ENCODE measurements at regions of chr21 and their contacts with region 1.

Region 1: DNA sequence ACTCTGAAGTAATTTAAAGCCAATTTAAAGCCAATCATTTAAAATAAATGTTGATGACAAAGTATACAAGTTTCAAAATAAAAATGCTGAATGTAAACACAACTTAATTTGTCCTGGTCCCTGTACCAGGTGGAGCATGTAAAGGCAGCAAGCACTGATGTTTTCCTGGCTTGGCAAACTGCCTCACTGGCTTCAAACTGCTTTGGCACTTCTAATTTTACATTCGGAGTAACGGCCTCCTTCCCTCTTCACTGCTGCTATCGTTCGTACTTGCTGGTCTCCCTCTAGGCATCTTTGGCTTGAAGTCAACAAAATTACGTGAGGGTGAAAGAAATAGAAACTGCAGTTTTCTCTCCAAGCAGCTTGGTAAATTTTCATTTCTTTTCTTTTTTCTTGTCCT is 287.9 kb downstream of the LTN1 start:
- DNase-seq: peak; percentile 65
- H3K4me3 ChIP-seq: no peak overlapping the region
- H3K27ac ChIP-seq: no peak overlapping the region
- H3K4me1 ChIP-seq: no peaks in the 10 kb centered on the region
- H3K27me3 ChIP-seq: no peaks in the 10 kb centered on the region
- CTCF ChIP-seq: no peak
- POLR2A ChIP-seq: no peak

Region 2: DNA sequence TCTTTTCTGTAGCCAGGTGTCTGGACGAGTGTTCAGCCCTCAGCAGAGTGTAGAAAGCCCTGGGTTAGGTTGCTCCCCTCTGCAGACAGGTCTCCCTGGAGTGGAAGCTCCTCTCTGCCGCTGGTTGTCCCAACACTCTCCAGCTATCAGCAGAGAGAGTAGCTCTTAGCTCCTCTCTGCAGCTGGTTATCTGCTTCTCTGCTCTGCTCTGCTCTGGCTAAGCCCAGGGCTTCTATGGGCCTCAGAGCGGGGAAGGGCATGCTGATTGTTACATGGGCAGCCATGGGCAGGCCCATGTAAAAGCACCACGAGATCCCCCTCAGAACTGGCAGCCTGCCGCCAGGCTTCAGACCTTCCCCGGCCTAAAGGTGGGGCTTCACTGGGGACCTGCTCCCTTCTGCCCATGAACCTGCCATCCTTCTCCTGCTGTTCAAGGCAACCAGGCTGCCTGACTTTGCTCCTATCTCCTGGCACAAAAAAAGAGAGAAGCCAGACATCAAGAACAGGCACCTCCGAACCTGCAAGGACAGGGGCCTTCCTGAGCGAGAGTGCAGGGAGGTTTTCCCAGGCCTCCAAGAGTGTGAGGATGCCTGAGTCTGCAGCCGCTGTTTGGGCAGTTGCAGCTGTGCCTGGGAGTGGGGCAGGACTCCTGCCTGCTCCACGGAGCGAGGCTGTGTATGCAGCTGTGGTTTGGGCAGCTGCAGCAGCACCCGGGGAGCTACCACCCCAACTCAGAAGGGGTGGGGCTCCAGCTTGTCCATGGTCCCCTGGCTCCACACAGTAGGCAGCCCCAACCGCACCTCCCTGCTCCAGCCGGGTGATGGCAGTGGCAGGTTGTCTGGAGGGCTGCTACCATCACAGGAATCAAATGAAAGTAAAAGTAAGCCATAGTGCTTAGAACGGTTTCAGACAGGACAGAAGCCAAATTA is 685.7 kb before region 1 on chr21:
- intact Hi-C with region 1: no loop called
- DNase-seq: no peak
- H3K4me3 ChIP-seq: no peak overlapping the region
- H3K27ac ChIP-seq: no peak overlapping the region
- H3K4me1 ChIP-seq: no peaks in the 10 kb centered on the region
- H3K27me3 ChIP-seq: no peaks in the 10 kb centered on the region
- CTCF ChIP-seq: no peak
- POLR2A ChIP-seq: no peak

Region 3: DNA sequence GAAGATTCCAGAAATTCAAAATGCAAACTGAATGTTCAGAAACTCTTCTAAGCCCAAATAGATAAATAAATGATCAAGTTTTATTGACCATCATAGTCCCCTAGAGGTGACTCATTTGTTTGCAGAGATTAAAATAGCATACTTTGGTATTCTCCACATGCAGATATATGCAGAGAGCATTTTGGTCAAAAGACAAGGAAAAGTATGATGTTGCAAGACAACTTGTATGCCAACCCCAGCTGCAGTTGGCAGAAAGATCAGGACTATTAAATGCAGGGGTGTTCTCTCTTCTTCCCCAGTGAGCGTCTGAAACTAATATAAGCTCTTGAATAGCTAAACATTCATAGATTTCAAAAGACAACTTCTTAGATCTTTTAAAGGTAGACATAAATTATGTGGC is 117.0 kb before region 1 on chr21:
- intact Hi-C with region 1: loop called (anchors 10 kb)
- DNase-seq: no peak
- H3K4me3 ChIP-seq: no peak overlapping the region
- H3K27ac ChIP-seq: no peak overlapping the region
- H3K4me1 ChIP-seq: no peaks in the 10 kb centered on the region
- H3K27me3 ChIP-seq: no peaks in the 10 kb centered on the region
- CTCF ChIP-seq: peak in 1 of 4 experiments; percentile 14
- POLR2A ChIP-seq: no peak

Measured in prostate gland (tissue), 2 donors.